ENCODE measurements at regions of chr10 and their contacts with region 1.

Region 1: GRCh38 chr10:100824886-100825285 is 79.5 kb downstream of the PAX2 start:
- DNase-seq: no peak
- ATAC-seq: no peak
- H3K4me3 ChIP-seq: no peak overlapping the region
- H3K4me3 Mint-ChIP-seq: peak overlapping the region in 1 of 3 donors; percentile 45
- H3K27ac ChIP-seq: no peak overlapping the region
- H3K27ac Mint-ChIP-seq: no peak overlapping the region
- H3K4me1 ChIP-seq: peaks cover 16 to 36% of the 10 kb centered on the region in 2 experiments
- H3K4me1 Mint-ChIP-seq: peaks cover 18 to 29% (median 27%) of the 10 kb centered on the region in 3 donors
- H3K27me3 ChIP-seq: peaks cover 19 to 63% of the 10 kb centered on the region in 2 experiments
- H3K27me3 Mint-ChIP-seq: peaks cover 65 to 72% of the 10 kb centered on the region in 2 donors

Region 2: GRCh38 chr10:100100651-100101184 is 724.2 kb before region 1 on chr10:
- CTCF ChIA-PET with region 1: no interaction called
- POLR2A ChIA-PET with region 1: interaction called in 1 of 2 experiments, 10 read pairs
- DNase-seq: no peak
- ATAC-seq: no peak
- H3K4me3 ChIP-seq: no peak overlapping the region
- H3K4me3 Mint-ChIP-seq: no peak overlapping the region
- H3K27ac ChIP-seq: no peak overlapping the region
- H3K27ac Mint-ChIP-seq: no peak overlapping the region
- H3K4me1 ChIP-seq: no peaks in the 10 kb centered on the region
- H3K4me1 Mint-ChIP-seq: no peaks in the 10 kb centered on the region
- H3K27me3 ChIP-seq: peaks cover 0 to 4% of the 10 kb centered on the region in 2 experiments
- H3K27me3 Mint-ChIP-seq: peaks cover 36 to 43% of the 10 kb centered on the region in 2 donors

Region 3: DNA sequence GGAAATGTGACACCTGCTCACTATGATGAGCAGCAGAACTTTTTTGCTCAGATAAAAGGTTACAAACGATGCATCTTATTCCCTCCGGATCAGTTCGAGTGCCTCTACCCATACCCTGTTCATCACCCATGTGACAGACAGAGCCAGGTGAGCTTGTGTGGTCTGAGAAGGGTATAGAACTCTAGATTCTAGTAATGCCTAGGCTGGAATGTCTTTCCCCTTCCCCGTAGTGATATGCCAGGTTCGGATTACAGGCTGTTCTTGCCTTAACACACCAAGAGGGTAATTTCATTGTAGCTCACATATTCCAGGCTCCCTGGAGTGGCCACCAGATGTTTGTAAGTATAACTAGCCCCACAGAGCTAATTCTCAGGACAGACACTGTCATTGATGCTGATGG is 279.9 kb before region 1 on chr10:
- CTCF ChIA-PET with region 1: no interaction called
- POLR2A ChIA-PET with region 1: no interaction called
- DNase-seq: no peak
- ATAC-seq: no peak
- H3K4me3 ChIP-seq: no peak overlapping the region
- H3K4me3 Mint-ChIP-seq: no peak overlapping the region
- H3K27ac ChIP-seq: no peak overlapping the region
- H3K27ac Mint-ChIP-seq: no peak overlapping the region
- H3K4me1 ChIP-seq: no peaks in the 10 kb centered on the region
- H3K4me1 Mint-ChIP-seq: peaks cover 3 to 6% (median 6%) of the 10 kb centered on the region in 3 donors
- H3K27me3 ChIP-seq: no peaks in the 10 kb centered on the region
- H3K27me3 Mint-ChIP-seq: no peaks in the 10 kb centered on the region